ENCODE measurements at regions of chr15 and their contacts with region 1.

Region 1: GRCh38 chr15:62977952-62978811 is 64.4 kb upstream of the TPM1 start:
- DNase-seq: no peak
- ATAC-seq: no peak
- H3K4me3 ChIP-seq: no peak overlapping the region
- H3K4me3 Mint-ChIP-seq: no peak overlapping the region
- H3K27ac ChIP-seq: no peak overlapping the region
- H3K27ac Mint-ChIP-seq: no peak overlapping the region
- H3K4me1 ChIP-seq: no peaks in the 10 kb centered on the region
- H3K4me1 Mint-ChIP-seq: no peaks in the 10 kb centered on the region
- H3K27me3 ChIP-seq: peaks cover 0 to 16% of the 10 kb centered on the region in 2 experiments
- H3K27me3 Mint-ChIP-seq: peaks cover 6 to 11% of the 10 kb centered on the region in 2 donors

Region 2: GRCh38 chr15:62941699-62942098 is 36.5 kb before region 1 on chr15:
- CTCF ChIA-PET with region 1: no interaction called
- POLR2A ChIA-PET with region 1: no interaction called
- DNase-seq: no peak
- ATAC-seq: no peak
- H3K4me3 ChIP-seq: no peak overlapping the region
- H3K4me3 Mint-ChIP-seq: no peak overlapping the region
- H3K27ac ChIP-seq: no peak overlapping the region
- H3K27ac Mint-ChIP-seq: no peak overlapping the region
- H3K4me1 ChIP-seq: no peaks in the 10 kb centered on the region
- H3K4me1 Mint-ChIP-seq: no peaks in the 10 kb centered on the region
- H3K27me3 ChIP-seq: peaks cover 0 to 16% of the 10 kb centered on the region in 2 experiments
- H3K27me3 Mint-ChIP-seq: peaks cover 27 to 35% of the 10 kb centered on the region in 2 donors

Region 3: DNA sequence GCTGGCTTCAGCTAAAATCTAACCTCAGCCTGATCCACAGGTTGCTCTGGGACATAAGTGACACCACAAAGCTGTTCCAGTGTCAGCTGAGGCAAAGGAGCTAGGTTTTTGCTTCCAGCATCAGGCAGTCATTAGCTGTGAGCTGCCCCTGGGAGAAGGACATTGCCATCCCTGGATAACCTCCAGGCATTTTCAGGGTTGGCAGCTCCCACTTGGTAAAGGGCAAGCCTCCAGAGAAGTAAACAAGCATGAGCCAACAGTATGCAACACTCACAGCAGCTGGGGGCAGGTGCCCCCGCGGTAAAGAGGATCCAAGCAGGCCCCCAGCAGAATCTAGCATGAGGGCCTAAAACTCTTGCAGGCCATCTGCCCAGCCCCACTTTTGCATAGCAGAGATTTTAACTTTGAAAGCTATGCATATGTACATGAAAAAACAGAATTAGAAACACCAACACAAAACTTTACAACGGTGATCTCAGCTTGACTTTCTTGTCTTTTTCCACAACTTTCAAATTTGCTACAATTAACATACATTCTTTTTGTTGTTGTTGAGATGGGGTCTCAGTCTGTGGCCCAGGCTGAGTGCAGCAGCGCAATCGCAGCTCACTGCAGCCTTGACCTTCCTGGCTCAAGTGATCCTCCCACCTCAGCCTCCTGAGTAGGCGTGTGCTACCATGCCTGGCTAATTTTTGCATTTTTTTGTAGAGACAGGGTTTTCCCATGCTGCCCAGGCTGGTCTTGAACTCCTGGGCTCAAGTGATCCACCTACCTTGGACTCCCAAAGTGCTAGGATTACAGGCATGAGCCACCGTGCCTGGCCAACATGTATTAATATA is 19.4 kb before region 1 on chr15:
- CTCF ChIA-PET with region 1: no interaction called
- POLR2A ChIA-PET with region 1: no interaction called
- DNase-seq: no peak
- ATAC-seq: no peak
- H3K4me3 ChIP-seq: no peak overlapping the region
- H3K4me3 Mint-ChIP-seq: no peak overlapping the region
- H3K27ac ChIP-seq: no peak overlapping the region
- H3K27ac Mint-ChIP-seq: no peak overlapping the region
- H3K4me1 ChIP-seq: no peaks in the 10 kb centered on the region
- H3K4me1 Mint-ChIP-seq: no peaks in the 10 kb centered on the region
- H3K27me3 ChIP-seq: peaks cover 0 to 9% of the 10 kb centered on the region in 2 experiments
- H3K27me3 Mint-ChIP-seq: peaks cover 3 to 4% of the 10 kb centered on the region in 2 donors

Region 4: DNA sequence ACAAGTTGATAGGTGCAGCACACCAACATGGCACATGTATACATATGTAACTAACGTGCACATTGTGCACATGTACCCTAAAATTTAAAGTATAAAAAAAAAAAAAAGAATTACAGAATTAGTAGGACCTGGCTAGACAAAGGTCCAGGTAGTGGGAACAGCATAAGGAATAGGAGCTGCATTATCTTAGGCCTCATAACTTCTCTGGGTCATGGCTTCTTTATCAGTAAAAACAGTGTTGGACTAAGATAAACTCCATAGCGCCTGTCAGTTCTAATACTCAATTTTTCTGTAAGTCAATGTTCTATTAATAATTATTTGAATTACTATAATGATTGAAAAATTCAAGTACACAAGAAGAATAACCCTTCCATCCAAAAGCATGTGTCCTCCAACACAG is 757.3 kb after region 1 on chr15:
- CTCF ChIA-PET with region 1: no interaction called
- POLR2A ChIA-PET with region 1: interaction called in 1 of 2 experiments, 12 read pairs
- DNase-seq: no peak
- ATAC-seq: no peak
- H3K4me3 ChIP-seq: no peak overlapping the region
- H3K4me3 Mint-ChIP-seq: no peak overlapping the region
- H3K27ac ChIP-seq: no peak overlapping the region
- H3K27ac Mint-ChIP-seq: no peak overlapping the region
- H3K4me1 ChIP-seq: no peaks in the 10 kb centered on the region
- H3K4me1 Mint-ChIP-seq: peaks cover 0 to 11% (median 6%) of the 10 kb centered on the region in 3 donors
- H3K27me3 ChIP-seq: no peaks in the 10 kb centered on the region
- H3K27me3 Mint-ChIP-seq: no peaks in the 10 kb centered on the region

Measured in T-cell (primary cell).